ENCODE measurements at regions of chr11 and their contacts with region 1.

Region 1: DNA sequence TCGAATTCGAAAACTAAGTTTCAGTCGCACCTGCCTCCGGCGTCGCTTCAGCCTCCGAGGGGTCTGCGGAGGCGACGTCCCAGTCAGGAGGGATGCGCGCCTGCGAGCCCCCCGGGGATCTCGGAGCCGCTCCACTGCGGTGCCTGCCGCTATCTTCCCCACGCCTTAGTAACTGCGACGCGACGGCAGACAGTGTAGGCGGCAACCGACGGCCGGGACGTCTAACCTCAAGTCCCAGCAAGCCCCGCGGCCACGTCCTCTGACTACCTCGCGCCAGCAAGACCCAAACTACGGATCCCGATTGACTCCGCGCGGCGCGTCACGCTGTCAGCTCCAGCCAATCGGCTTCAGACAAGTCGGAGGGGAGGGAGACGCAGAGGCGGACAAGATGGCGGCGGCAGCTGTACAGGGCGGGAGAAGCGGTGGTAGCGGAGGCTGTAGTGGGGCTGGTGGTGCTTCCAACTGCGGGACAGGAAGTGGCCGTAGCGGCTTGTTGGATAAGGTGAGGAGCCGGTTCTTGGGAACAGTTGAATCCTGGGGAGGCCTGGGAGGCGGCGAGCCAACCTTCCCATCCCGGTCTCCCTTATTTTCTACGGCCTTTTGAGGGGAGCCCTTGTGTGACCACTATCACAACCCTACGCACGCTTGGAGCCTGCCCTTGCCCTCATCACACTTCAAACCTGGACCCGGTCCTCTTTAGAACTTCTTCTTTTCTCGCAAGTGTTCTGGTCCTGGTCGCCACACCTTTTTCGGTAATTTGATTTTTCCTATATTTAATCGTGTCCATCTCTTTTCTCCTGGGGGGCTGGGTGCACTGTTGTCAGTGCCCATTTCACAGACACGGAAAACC is at the starts of genes SPCS2 and XRRA1:
- H3K4me3 Mint-ChIP-seq: peak within 1 kb of the TSS; percentile 85
- H3K27ac Mint-ChIP-seq: peak within 1 kb of the TSS; percentile 96
- H3K4me1 Mint-ChIP-seq: peaks cover 49% of the 10 kb centered on the region
- H3K27me3 Mint-ChIP-seq: no peaks in the 10 kb centered on the region

Region 2: DNA sequence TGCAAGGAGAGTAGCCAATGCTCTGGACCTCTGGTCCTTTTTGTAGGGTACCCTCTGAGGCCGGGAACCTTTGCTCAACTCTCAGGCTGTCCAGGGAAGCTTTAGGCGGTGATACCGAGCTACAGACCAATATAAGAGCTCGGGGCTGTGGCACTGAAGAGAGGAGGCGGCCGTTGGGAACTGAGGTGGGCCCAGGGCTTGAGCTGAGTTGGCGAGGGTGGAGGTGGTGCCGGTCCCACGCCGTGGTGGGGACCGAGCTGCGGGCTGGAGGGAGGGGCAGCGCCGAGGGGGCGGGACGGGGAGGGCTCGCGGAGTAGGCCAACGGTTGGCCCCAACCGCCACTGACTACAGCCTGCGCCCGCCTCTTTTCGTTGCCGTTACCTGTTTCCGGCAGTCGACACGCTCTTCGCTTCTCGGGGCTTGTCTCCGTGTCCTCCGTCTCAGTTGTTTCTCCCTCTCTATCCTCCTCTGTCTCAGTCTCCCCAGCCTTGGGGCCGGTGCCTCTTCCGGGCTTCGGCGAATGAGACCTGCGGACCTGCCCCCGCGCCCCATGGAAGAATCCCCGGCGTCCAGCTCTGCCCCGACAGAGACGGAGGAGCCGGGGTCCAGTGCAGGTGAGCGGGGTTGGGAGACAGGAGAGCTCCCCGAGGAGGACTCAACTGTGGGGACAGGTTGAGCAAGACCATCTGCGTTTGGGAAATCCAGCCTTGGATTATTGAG is 39.6 kb after region 1 on chr11 and contains the start of gene NEU3:
- intact Hi-C with region 1: loop called (anchors 2 kb)
- H3K4me3 Mint-ChIP-seq: peak within 1 kb of the TSS; percentile 98
- H3K27ac Mint-ChIP-seq: peak within 1 kb of the TSS; percentile 93
- H3K4me1 Mint-ChIP-seq: peaks cover 40% of the 10 kb centered on the region
- H3K27me3 Mint-ChIP-seq: no peaks in the 10 kb centered on the region

Region 3: DNA sequence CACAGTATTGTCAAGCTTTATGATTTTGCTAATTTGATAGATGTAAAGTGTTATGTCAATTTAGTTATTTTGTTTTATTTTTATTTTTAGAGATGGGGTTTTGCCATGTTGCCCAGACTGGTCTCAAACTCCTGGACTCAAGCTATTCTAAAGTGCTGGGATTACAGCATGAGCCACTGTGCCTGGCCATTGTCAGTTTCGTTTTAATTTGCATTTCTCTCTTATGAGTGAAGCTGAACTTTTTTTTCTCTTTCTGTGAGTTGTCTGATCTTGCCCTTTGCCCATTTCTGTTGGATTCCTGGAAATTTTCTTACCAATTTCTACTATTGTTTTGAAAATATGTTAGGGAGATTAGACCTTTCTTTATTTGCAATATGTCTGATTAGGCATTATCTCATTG is 55.1 kb after region 1 on chr11:
- intact Hi-C with region 1: no loop called
- H3K4me3 Mint-ChIP-seq: no peak overlapping the region
- H3K27ac Mint-ChIP-seq: no peak overlapping the region
- H3K4me1 Mint-ChIP-seq: peaks cover 18% of the 10 kb centered on the region
- H3K27me3 Mint-ChIP-seq: no peaks in the 10 kb centered on the region

Measured in dendritic cell treated with granulocyte-macrophage colony-stimulating factor and Interleukin-4, amounts not matched to agents 40 ng/mL and 50 ng/mL, for 4 days (primary cell).